PC-9 (cell line): ENCODE measurements at regions of chr16 and their contacts with region 1.

Region 1: GRCh38 chr16:67207857-67208519 is 9.1 kb downstream of the ELMO3 start:
- DNase-seq: peak; percentile 77 to 86
- H3K4me3 ChIP-seq: no peak overlapping the region; the same call in 1 of the 2 replicates
- H3K27ac ChIP-seq: peak overlapping the region; percentile 64
- H3K4me1 ChIP-seq: peaks cover 50% of the 10 kb centered on the region
- H3K27me3 ChIP-seq: no peaks in the 10 kb centered on the region
- CTCF ChIP-seq: no peak

Region 2: GRCh38 chr16:66751303-66751991 is 456.5 kb before region 1 on chr16 and contains the start of gene DYNC1LI2:
- CTCF ChIA-PET with region 1: no interaction called
- POLR2A ChIA-PET with region 1: no interaction called
- intact Hi-C with region 1: no loop called
- DNase-seq: peak; percentile 45 to 80
- H3K4me3 ChIP-seq: peak within 1 kb of the TSS; percentile 89
- H3K27ac ChIP-seq: peak within 1 kb of the TSS; percentile 61
- H3K4me1 ChIP-seq: peaks cover 14% of the 10 kb centered on the region
- H3K27me3 ChIP-seq: no peaks in the 10 kb centered on the region
- CTCF ChIP-seq: no peak
- total RNA-seq, gene DYNC1LI2: 92.7 and 109 TPM in 2 replicates

Region 3: GRCh38 chr16:66947302-66948065 is 260.5 kb before region 1 on chr16:
- CTCF ChIA-PET with region 1: interaction called, 5 read pairs
- POLR2A ChIA-PET with region 1: interaction called, 11 read pairs
- intact Hi-C with region 1: no loop called
- DNase-seq: peak; percentile 72 to 80
- H3K4me3 ChIP-seq: peak overlapping the region; percentile 66
- H3K27ac ChIP-seq: no peak overlapping the region
- H3K4me1 ChIP-seq: no peaks in the 10 kb centered on the region
- H3K27me3 ChIP-seq: no peaks in the 10 kb centered on the region
- CTCF ChIP-seq: peak; percentile 94

Region 4: GRCh38 chr16:66977341-66978113 is 230.5 kb before region 1 on chr16:
- CTCF ChIA-PET with region 1: no interaction called
- POLR2A ChIA-PET with region 1: interaction called, 18 read pairs
- intact Hi-C with region 1: no loop called
- DNase-seq: peak; percentile 62 to 82
- H3K4me3 ChIP-seq: no peak overlapping the region
- H3K27ac ChIP-seq: no peak overlapping the region
- H3K4me1 ChIP-seq: no peaks in the 10 kb centered on the region
- H3K27me3 ChIP-seq: no peaks in the 10 kb centered on the region
- CTCF ChIP-seq: peak; percentile 96

Region 5: GRCh38 chr16:67226804-67227557 is 19.0 kb after region 1 on chr16 and contains the start of gene TMEM208:
- CTCF ChIA-PET with region 1: no interaction called
- POLR2A ChIA-PET with region 1: interaction called, 11 read pairs
- intact Hi-C with region 1: no loop called
- DNase-seq: peak; percentile 93 to 98
- H3K4me3 ChIP-seq: peak within 1 kb of the TSS; percentile 91
- H3K27ac ChIP-seq: peak within 1 kb of the TSS; percentile 20; the same call in 1 of the 2 replicates
- H3K4me1 ChIP-seq: peaks cover 15% of the 10 kb centered on the region
- H3K27me3 ChIP-seq: no peaks in the 10 kb centered on the region
- CTCF ChIP-seq: no peak; the same call in 1 of the 2 replicates
- total RNA-seq, gene TMEM208: 39.5 and 42.0 TPM in 2 replicates

Region 6: GRCh38 chr16:67246934-67247697 is 39.1 kb after region 1 on chr16 and contains the start of gene FHOD1:
- CTCF ChIA-PET with region 1: interaction called, 6 read pairs
- POLR2A ChIA-PET with region 1: interaction called, 24 read pairs
- intact Hi-C with region 1: loop called (anchors 2 kb)
- DNase-seq: peak; percentile 84 to 98
- H3K4me3 ChIP-seq: peak within 1 kb of the TSS; percentile 90
- H3K27ac ChIP-seq: peak within 1 kb of the TSS; percentile 76
- H3K4me1 ChIP-seq: peaks cover 45% of the 10 kb centered on the region
- H3K27me3 ChIP-seq: no peaks in the 10 kb centered on the region; the same call in 1 of the 2 replicates
- CTCF ChIP-seq: 0 out of 2 replicates have a peak, but pooled peaks have one; percentile 39
- total RNA-seq, gene FHOD1: 58.2 and 60.0 TPM in 2 replicates

Region 7: GRCh38 chr16:67384778-67385510 is 177.0 kb after region 1 on chr16:
- CTCF ChIA-PET with region 1: interaction called, 3 read pairs
- POLR2A ChIA-PET with region 1: interaction called, 11 read pairs
- intact Hi-C with region 1: no loop called
- DNase-seq: no peak
- H3K4me3 ChIP-seq: no peak overlapping the region
- H3K27ac ChIP-seq: no peak overlapping the region
- H3K4me1 ChIP-seq: no peaks in the 10 kb centered on the region
- H3K27me3 ChIP-seq: no peaks in the 10 kb centered on the region
- CTCF ChIP-seq: no peak